RWPE1 (cell line): ENCODE measurements at regions of chr4 and their contacts with region 1.

Region 1: DNA sequence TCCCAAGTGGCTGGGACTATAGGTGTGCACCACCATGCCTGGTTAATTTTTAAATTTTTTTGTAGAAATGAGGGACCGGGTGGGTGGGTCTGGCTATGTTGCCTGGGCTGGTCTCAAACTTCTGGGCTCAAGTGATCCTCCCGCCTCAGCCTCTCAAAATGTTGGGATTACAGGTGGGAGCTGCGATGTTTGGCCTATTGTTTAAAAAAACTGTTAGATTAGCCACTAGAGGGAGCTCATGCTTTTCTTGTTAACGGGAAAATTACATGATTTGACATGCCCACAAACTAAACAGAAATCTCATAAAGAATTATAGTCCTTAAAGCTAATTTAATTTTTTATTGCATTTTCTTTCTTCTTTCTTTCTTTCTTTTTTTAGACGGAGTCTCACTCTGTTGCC is 5.0 kb upstream of the SDAD1 start:
- DNase-seq: peak; percentile 41
- H3K27ac ChIP-seq: peak overlapping the region; percentile 29; the same call in 1 of the 2 replicates
- CTCF ChIP-seq: peak; percentile 56

Region 2: GRCh38 chr4:76011700-76012387 is 16.1 kb after region 1 on chr4:
- CTCF ChIA-PET with region 1: no interaction called
- POLR2A ChIA-PET with region 1: no interaction called
- DNase-seq: peak; percentile 34
- H3K27ac ChIP-seq: peak overlapping the region; percentile 89
- CTCF ChIP-seq: no peak

Region 3: DNA sequence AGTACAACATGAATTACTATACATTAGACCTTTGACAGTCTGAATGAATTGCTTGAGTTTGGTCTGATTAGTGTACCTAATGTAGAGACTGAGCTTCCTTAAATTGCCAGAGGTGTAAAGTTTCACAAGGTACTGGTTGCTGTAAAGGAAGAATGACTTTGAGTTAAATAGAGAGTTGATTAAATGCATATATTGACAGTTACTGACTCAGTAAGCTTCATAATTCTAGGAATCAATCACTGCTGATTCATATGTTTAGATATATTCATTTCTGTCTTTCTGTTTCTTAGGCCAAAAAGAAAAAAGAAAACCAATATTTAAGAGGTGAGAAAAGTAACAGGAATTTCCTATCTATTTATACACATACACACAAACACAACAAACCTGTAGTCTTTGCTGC is 62.6 kb after region 1 on chr4:
- CTCF ChIA-PET with region 1: interaction called, 10 read pairs
- POLR2A ChIA-PET with region 1: no interaction called
- DNase-seq: no peak
- H3K27ac ChIP-seq: no peak overlapping the region
- CTCF ChIP-seq: no peak

Region 4: GRCh38 chr4:76067652-76068286 is 72.0 kb after region 1 on chr4:
- CTCF ChIA-PET with region 1: interaction called, 17 read pairs
- POLR2A ChIA-PET with region 1: no interaction called
- DNase-seq: peak; percentile 73
- H3K27ac ChIP-seq: no peak overlapping the region
- CTCF ChIP-seq: peak; percentile 83